ENCODE measurements at regions of chr2 and their contacts with region 1.

Region 1: GRCh38 chr2:233053928-233054784 is 6.0 kb upstream of the INPP5D start:
- DNase-seq: peak; percentile 89
- CTCF ChIP-seq: peak; percentile 90

Region 2: GRCh38 chr2:232668805-232669444 is 385.2 kb before region 1 on chr2:
- CTCF ChIA-PET with region 1: no interaction called
- POLR2A ChIA-PET with region 1: no interaction called
- DNase-seq: no peak
- CTCF ChIP-seq: peak; percentile 17

Region 3: GRCh38 chr2:232854082-232854481 is 200.1 kb before region 1 on chr2:
- CTCF ChIA-PET with region 1: interaction called, 34 read pairs
- POLR2A ChIA-PET with region 1: no interaction called
- DNase-seq: no peak
- CTCF ChIP-seq: no peak

Region 4: GRCh38 chr2:232924433-232924832 is 129.7 kb before region 1 on chr2:
- CTCF ChIA-PET with region 1: no interaction called
- POLR2A ChIA-PET with region 1: no interaction called
- DNase-seq: no peak
- CTCF ChIP-seq: no peak

Region 5: DNA sequence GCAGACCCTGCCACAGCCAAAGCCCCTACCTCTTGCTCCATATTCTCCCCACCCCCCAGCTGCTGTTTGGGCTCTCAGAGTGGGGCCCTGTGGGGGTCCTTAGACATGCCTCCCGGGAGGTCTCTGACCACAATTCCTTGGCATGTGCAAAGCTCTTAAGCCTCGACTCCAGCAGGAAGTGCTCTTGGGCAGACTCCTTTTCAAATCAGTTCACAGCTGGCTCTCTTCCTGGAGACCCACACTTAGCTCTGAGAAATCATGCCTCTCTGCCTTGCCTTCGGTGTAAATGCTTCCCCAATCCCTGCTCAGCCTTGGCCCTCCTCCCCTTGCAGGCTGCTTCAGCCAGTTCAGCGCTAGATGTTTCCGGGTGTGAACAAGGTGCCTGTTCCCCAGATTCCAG is 88.0 kb before region 1 on chr2:
- CTCF ChIA-PET with region 1: interaction called, 10 read pairs
- POLR2A ChIA-PET with region 1: no interaction called
- DNase-seq: no peak
- CTCF ChIP-seq: no peak

Region 6: DNA sequence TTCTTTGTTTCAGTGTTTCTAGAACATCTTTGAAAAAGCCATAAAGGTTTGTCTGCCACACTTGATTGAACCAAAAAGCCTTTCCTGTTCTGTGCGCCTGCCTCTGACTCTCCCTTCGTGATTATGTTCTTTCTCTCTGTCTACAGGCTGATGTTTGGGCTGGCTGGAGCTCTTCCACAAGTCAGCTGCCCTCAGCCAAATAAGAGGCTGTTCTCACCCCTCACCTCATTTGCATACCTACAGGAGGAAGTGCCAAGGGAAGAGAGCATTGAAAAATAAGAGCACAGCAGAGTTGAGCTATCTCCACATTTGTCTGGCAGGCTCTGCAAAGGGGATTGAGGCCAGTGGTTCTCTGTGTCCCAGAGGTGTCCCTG is 21.8 kb after region 1 on chr2:
- CTCF ChIA-PET with region 1: interaction called, 55 read pairs
- POLR2A ChIA-PET with region 1: no interaction called
- DNase-seq: no peak
- CTCF ChIP-seq: no peak

Region 7: GRCh38 chr2:233251306-233252116 is 197.4 kb after region 1 on chr2 and contains the start of gene ATG16L1:
- CTCF ChIA-PET with region 1: interaction called, 14 read pairs
- POLR2A ChIA-PET with region 1: no interaction called
- DNase-seq: peak; percentile 99
- CTCF ChIP-seq: peak; percentile 99